ENCODE measurements at regions of chr4 and their contacts with region 1.

Region 1: GRCh38 chr4:126071346-126072333 is 756.9 kb downstream of the FAT4 start:
- DNase-seq: no peak
- ATAC-seq: peak; percentile 49 to 85 (median 68)
- H3K4me3 ChIP-seq: no peak overlapping the region
- H3K27ac ChIP-seq: no peak overlapping the region
- H3K4me1 ChIP-seq: peaks cover 0 to 14% (median 6%) of the 10 kb centered on the region in 9 donors
- H3K27me3 ChIP-seq: no peaks in the 10 kb centered on the region
- CTCF ChIP-seq: no peak

Region 2: GRCh38 chr4:126611900-126612299 is 540.3 kb after region 1 on chr4:
- intact Hi-C with region 1: loop called in 1 of 10 experiments (anchors 10 kb)
- DNase-seq: no peak
- ATAC-seq: no peak
- H3K4me3 ChIP-seq: no peak overlapping the region
- H3K27ac ChIP-seq: no peak overlapping the region
- H3K4me1 ChIP-seq: no peaks in the 10 kb centered on the region
- H3K27me3 ChIP-seq: no peaks in the 10 kb centered on the region
- CTCF ChIP-seq: no peak

Measured in heart right ventricle (tissue), 16 donors.